ENCODE measurements at regions of chr2 and their contacts with region 1.

Region 1: GRCh38 chr2:7825591-7826312 is 856.1 kb upstream of the ID2 start:
- DNase-seq: peak; percentile 55
- H3K4me3 Mint-ChIP-seq: peak overlapping the region; percentile 23
- H3K27ac Mint-ChIP-seq: peak overlapping the region; percentile 97
- H3K4me1 Mint-ChIP-seq: peaks cover 41% of the 10 kb centered on the region
- H3K27me3 Mint-ChIP-seq: peaks cover 4% of the 10 kb centered on the region

Region 2: GRCh38 chr2:7567646-7568045 is 258.1 kb before region 1 on chr2:
- intact Hi-C with region 1: loop called (anchors 1 kb)
- DNase-seq: peak; percentile 47
- H3K4me3 Mint-ChIP-seq: peak overlapping the region; percentile 25
- H3K27ac Mint-ChIP-seq: peak overlapping the region; percentile 90
- H3K4me1 Mint-ChIP-seq: peaks cover 59% of the 10 kb centered on the region
- H3K27me3 Mint-ChIP-seq: no peaks in the 10 kb centered on the region

Region 3: GRCh38 chr2:7725171-7725849 is 100.4 kb before region 1 on chr2:
- intact Hi-C with region 1: loop called (anchors 1 kb)
- DNase-seq: peak; percentile 64
- H3K4me3 Mint-ChIP-seq: peak overlapping the region; percentile 87
- H3K27ac Mint-ChIP-seq: peak overlapping the region; percentile 95
- H3K4me1 Mint-ChIP-seq: peaks cover 73% of the 10 kb centered on the region
- H3K27me3 Mint-ChIP-seq: no peaks in the 10 kb centered on the region

Region 4: GRCh38 chr2:7984693-7985353 is 159.1 kb after region 1 on chr2:
- intact Hi-C with region 1: loop called (anchors 1 kb)
- DNase-seq: no peak
- H3K4me3 Mint-ChIP-seq: peak overlapping the region; percentile 12
- H3K27ac Mint-ChIP-seq: peak overlapping the region; percentile 82
- H3K4me1 Mint-ChIP-seq: peaks cover 28% of the 10 kb centered on the region
- H3K27me3 Mint-ChIP-seq: no peaks in the 10 kb centered on the region

Region 5: GRCh38 chr2:8303322-8303832 is 477.6 kb after region 1 on chr2:
- intact Hi-C with region 1: loop called (anchors 2 kb)
- DNase-seq: peak; percentile 77
- H3K4me3 Mint-ChIP-seq: peak overlapping the region; percentile 65
- H3K27ac Mint-ChIP-seq: peak overlapping the region; percentile 85
- H3K4me1 Mint-ChIP-seq: peaks cover 91% of the 10 kb centered on the region
- H3K27me3 Mint-ChIP-seq: peaks cover 7% of the 10 kb centered on the region